Left colon (tissue), 2 donors: ENCODE measurements at regions of chr17 and their contacts with region 1.

Region 1: DNA sequence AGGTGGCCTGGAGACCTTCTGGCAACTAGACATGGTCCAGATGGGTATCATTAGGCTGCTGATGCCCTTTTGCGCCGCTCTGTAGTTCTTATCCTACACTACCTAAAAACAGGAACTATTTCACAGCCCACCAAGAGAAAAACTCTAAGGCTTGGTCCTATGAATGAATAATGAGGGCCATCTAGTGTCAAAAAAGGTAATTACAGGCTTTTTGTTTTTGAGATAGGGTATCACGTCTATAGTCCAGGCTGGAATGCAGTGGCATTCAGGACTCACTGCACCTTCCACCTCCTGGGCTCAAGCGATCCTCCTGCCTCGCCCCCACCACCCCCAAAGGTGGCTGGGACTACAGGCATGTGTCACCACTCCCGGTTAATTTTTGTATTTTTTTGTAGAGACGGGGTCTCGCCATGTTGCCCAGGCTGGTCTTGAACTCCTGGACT is 20.9 kb downstream of the COIL start:
- DNase-seq: no peak
- ATAC-seq: peak; percentile 66

Region 2: DNA sequence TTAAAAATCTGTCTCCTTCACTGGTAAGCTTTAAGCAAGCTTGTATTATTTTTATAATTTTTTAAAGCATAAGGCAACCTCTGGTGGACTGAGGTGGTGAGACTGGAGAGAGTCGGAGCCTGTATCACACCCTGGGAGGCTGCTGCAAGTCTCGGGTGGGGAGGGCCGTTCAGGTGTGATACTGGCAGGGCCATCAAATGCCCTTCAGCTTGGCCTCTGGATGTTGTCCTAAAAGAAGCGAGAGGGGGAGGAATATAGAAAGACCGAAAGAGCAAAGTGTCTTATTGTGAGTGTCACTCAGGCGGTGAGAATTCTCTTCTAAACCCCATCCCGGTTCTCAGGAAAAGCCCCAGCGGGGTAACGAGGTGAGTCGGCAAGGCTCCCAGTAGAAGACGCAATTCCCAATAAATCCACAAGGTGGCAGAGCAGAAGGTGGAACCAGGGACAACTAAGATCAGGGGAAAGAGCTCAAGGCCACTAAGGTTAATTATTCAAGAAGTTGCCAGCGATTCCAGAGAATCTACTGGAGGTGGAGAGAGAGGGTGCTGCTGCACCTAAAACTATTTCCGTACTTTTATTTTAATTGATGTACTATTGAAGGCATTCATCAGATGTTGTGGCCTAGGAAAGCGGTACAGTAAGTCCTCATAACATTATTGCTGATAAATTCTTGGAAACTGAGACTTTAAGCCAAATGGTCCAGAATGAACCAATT is 120.3 kb before region 1 on chr17:
- intact Hi-C with region 1: loop called (anchors 5 to 10 kb)
- DNase-seq: peak; percentile 53 to 69
- ATAC-seq: peak; percentile 90

Region 3: DNA sequence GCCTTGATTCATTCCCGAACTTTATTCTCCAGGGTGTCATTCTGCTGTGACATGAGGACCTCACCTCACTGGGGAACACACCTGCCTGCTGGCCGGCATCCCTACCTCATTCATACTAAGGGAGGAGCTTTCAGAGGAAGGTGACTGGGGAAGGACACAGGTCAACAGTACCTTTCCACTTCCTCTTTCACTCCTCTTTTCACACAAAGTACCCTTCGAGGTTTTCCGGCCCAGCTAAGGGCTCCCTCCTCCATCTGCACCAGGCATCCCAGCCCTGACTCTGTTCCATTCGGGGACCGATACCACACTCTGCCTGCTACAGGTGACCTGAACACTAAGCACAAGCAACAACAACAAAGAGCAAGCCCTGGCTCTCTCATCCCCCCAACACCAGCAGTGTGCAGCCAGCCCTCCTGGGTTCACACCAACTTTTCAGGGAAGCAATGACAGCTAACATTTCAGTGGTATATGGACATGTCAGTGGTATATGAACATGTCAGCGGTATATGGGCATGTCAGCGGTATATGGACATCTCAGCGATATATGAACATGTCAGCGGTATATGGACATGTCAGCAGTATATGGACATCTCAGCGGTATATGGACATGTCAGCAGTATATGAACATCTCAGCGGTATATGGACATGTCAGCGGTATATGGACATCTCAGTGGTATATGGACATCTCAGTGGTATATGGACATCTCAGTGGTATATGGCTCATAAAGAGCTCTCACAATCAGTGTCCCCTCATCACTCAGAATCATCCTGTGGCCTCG is 42.1 kb before region 1 on chr17:
- intact Hi-C with region 1: loop called in 1 of 2 experiments (anchors 5 kb)
- DNase-seq: no peak
- ATAC-seq: peak; percentile 81

Region 4: DNA sequence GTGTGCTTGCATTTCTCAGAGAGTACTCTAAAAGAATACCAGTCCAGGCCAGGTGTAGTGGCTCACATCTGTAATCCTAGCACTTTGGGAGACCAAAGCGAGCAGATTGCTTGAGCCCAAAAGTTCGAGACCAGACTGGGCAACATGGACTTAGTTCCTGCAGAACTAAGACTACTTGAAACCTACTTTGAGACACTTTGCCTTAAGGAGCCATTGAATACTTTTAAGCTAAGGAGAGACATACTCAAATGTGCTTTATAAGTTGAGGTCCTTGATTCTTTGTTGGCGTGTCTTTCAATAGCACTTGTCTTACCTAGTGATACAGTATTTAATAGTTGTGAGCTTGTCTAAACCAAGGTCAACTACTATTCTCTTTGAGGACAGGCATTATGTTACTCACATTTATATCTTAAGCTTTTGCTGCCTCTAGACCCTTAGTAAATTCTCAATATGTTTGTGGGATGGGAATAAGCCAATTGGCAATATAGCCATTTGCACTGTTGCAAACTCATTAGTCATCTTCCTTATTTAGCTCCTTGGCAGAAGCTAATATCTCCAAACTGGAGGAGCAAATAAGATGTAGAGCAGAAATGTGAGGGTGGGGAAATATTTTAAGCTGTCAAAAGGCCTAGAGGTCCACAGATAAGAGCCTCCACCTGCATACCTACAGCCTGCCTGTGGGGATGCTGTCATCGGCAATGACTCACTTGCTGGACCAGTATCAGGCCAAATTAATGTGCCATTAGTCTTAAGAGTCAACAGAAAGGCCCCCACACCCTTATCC is 54.3 kb after region 1 on chr17:
- intact Hi-C with region 1: no loop called
- DNase-seq: no peak
- ATAC-seq: no peak